GM10248 (cell line): ENCODE measurements at regions of chr3 and their contacts with region 1.

Region 1: GRCh38 chr3:98602078-98602678 is 8.8 kb upstream of the CPOX start:
- DNase-seq: peak; percentile 53
- CTCF ChIP-seq: peak; percentile 81

Region 2: DNA sequence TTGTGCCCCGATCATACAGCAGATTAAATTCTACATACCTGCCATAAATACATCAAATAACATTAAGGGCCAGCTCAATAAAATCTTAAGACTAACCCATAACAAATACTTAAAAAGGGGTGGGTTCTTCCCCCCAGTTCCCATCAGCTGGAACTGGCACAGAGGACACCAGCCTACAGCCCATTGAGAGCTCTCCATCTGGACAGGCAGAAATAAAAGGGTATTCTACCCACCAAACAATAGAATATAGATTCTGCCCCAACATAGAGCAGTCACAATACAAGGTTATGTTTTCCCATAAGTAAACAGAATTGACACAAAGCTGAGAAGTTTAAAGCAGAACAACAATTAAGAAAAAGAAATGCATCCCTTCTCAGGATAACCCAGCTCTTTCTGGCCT is 20.7 kb before region 1 on chr3:
- CTCF ChIA-PET with region 1: interaction called, 39 read pairs
- POLR2A ChIA-PET with region 1: no interaction called
- DNase-seq: no peak
- CTCF ChIP-seq: no peak

Region 3: GRCh38 chr3:98617841-98618240 is 15.7 kb after region 1 on chr3:
- CTCF ChIA-PET with region 1: interaction called, 66 read pairs
- POLR2A ChIA-PET with region 1: no interaction called
- DNase-seq: no peak
- CTCF ChIP-seq: no peak

Region 4: GRCh38 chr3:98732286-98733052 is 130.3 kb after region 1 on chr3:
- CTCF ChIA-PET with region 1: interaction called, 25 read pairs
- POLR2A ChIA-PET with region 1: no interaction called
- DNase-seq: peak; percentile 45
- CTCF ChIP-seq: no peak

Region 5: DNA sequence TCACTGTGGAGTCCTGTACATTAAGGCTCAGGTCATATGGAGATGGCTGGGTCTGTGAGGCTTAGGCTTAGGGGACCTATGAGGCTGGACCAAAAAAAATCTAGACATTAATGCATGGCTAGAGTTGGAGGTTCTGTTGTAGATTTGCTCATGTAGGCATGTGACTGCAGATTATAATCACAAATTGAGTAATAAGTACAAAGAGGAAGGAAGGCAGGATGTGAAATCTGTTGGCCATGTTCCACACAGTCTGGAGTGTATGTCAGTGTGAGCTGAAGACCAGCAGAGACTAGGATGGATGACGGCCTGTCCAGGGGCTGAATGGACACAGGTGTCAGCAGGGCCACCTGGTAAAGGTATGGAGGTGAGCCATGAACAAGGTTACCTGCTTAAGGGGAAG is 160.9 kb after region 1 on chr3 and contains the start of gene ST3GAL6:
- CTCF ChIA-PET with region 1: interaction called, 14 read pairs
- POLR2A ChIA-PET with region 1: no interaction called
- DNase-seq: no peak
- CTCF ChIP-seq: no peak

Region 6: DNA sequence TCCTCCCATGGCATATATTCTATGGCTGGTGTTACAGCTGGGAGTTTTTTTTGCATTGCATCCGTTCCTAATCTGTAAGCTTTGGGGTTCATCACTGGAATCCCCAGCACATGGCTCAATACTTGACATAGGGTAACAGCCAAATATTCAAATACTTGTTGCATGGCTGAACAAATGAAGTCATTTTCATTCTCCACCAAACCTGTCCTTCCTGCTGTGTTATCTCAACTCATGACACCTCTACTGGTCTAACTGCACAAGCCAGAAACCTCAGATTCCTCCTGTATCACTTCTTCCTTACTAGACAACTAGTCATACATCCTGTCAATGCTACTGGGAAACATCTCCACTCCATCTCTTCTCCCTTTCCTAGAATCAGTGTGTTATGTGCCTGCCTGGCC is 204.4 kb after region 1 on chr3:
- CTCF ChIA-PET with region 1: interaction called, 269 read pairs
- POLR2A ChIA-PET with region 1: no interaction called
- DNase-seq: no peak
- CTCF ChIP-seq: no peak